ENCODE measurements at regions of chr9 and their contacts with region 1.

Region 1: DNA sequence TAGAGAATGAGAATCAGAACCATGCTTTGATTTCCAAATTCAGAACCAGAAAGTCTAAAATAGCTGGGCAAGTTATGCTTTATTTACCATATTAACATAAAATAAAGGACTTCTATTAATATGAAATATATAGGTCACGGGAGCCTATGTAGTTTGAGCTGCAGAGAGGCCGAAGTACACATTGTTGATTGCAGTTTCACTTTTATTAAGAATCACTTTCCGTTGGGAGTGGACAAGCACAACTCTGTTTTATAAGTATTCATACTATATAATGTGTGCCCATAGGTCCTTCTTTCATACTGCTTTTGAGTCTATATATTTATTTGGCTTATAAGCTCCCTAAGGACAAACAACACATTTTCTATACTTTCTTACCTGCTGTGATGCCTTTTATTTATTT is 58.7 kb upstream of the DMRT3 start:
- DNase-seq: no peak
- ATAC-seq: no peak
- H3K4me3 ChIP-seq: no peak overlapping the region
- H3K27ac ChIP-seq: no peak overlapping the region
- H3K4me1 ChIP-seq: no peaks in the 10 kb centered on the region
- CTCF ChIP-seq: no peak
- EP300 ChIP-seq: no peak
- POLR2A ChIP-seq: no peak
- RAD21 ChIP-seq: no peak

Region 2: DNA sequence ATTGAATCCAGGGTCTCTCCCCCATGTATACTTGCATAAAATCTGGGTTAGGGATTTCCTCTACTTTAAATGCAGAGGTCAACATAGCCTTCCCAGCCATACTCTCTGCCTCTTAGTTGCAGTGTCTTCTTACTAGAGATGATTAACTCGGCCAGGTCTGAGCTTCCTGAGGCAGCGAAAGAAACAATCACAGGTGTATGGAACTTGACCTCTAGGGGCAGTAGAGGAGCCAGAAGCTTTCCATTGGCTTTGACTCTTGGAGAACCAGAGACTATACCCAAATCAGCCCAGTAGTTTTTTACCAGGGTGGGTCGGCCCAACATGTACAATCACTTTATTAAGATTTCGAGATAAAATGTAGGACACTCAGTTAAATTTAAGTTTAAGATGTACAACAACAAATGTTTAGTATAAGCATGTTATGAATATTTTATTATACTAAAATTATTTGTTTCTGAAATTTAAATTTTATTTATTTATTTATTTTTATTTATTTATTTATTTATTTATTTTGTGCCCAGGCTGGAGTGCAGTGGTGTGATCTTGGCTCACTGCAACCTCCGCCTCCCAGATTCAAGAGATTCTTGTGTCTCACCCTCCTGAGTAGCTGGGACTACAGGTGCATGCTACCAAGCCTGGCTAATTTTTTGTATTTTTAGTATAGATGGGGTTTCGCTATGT is 10.8 kb after region 1 on chr9:
- CTCF ChIA-PET with region 1: interaction called, 10 read pairs
- POLR2A ChIA-PET with region 1: no interaction called
- DNase-seq: peak; percentile 35 to 48
- ATAC-seq: peak; percentile 69 to 86; a peak in 3 of 6 replicates
- H3K4me3 ChIP-seq: no peak overlapping the region
- H3K27ac ChIP-seq: no peak overlapping the region
- H3K4me1 ChIP-seq: no peaks in the 10 kb centered on the region
- CTCF ChIP-seq: peak; percentile 35; the same call in 2 of the 3 replicates
- EP300 ChIP-seq: no peak
- POLR2A ChIP-seq: no peak
- RAD21 ChIP-seq: no peak

Region 3: DNA sequence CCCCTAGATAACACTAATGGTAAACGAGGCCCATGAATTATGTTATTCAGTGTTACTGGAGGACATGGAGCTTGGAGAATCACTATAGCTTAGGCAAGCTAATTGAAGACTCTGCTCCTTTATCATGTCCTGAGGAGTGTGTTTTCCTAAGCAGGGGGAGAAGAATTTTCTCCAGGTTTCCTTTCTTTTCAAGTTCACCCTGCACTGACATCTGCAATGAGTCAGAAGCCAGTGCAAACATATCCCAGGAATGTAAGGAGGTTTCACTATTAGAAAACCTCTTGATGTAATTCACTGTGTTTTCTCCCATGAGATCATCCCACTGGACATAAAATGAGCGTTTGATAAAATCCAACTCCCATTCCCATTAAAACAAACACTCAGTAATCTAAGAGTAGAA is 208.0 kb after region 1 on chr9:
- CTCF ChIA-PET with region 1: no interaction called
- POLR2A ChIA-PET with region 1: no interaction called
- DNase-seq: peak in 1 of 2 experiments; percentile 31
- ATAC-seq: peak; percentile 59 to 66; a peak in 5 of 6 replicates
- H3K4me3 ChIP-seq: no peak overlapping the region
- H3K27ac ChIP-seq: no peak overlapping the region
- H3K4me1 ChIP-seq: no peaks in the 10 kb centered on the region
- CTCF ChIP-seq: no peak
- EP300 ChIP-seq: no peak
- POLR2A ChIP-seq: no peak
- RAD21 ChIP-seq: no peak

Measured in A549 (cell line).